Activated CD8-positive, alpha-beta T cell treated with anti-CD3 and anti-CD28 coated beads for 36 hours (primary cell): ENCODE measurements at regions of chr22 and their contacts with region 1.

Region 1: DNA sequence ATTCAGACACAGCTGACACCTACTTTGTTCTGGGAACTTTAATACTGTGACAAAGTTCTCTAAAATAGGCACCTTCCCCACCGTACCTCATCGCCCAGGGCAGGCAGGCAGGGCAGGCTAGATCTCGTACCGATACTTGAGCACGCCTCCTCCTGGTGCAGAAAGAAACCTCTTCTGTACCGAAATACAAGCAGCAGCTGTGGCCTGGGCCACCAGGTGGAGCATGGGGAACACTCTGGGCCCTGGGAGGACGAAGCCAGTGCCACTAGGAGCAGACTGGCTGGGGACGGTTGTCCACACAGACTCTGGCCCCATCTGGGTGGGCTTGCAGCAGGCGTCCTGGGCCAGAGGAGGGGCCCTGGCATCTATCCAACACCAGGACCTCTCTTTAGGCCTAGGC is 12.8 kb downstream of the PMM1 start:
- DNase-seq: peak; percentile 64
- ATAC-seq: peak; percentile 75
- H3K4me3 Mint-ChIP-seq: no peak overlapping the region
- H3K27ac Mint-ChIP-seq: no peak overlapping the region
- H3K4me1 Mint-ChIP-seq: no peaks in the 10 kb centered on the region
- H3K27me3 Mint-ChIP-seq: no peaks in the 10 kb centered on the region
- CTCF ChIP-seq: peak; percentile 61

Region 2: GRCh38 chr22:41448189-41448808 is 128.6 kb before region 1 on chr22:
- CTCF ChIA-PET with region 1: no interaction called
- POLR2A ChIA-PET with region 1: no interaction called
- intact Hi-C with region 1: no loop called
- DNase-seq: peak; percentile 95
- ATAC-seq: peak; percentile 67
- H3K4me3 Mint-ChIP-seq: peak overlapping the region; percentile 90
- H3K27ac Mint-ChIP-seq: peak overlapping the region; percentile 99
- H3K4me1 Mint-ChIP-seq: peaks cover 10% of the 10 kb centered on the region
- H3K27me3 Mint-ChIP-seq: no peaks in the 10 kb centered on the region
- CTCF ChIP-seq: no peak

Region 3: DNA sequence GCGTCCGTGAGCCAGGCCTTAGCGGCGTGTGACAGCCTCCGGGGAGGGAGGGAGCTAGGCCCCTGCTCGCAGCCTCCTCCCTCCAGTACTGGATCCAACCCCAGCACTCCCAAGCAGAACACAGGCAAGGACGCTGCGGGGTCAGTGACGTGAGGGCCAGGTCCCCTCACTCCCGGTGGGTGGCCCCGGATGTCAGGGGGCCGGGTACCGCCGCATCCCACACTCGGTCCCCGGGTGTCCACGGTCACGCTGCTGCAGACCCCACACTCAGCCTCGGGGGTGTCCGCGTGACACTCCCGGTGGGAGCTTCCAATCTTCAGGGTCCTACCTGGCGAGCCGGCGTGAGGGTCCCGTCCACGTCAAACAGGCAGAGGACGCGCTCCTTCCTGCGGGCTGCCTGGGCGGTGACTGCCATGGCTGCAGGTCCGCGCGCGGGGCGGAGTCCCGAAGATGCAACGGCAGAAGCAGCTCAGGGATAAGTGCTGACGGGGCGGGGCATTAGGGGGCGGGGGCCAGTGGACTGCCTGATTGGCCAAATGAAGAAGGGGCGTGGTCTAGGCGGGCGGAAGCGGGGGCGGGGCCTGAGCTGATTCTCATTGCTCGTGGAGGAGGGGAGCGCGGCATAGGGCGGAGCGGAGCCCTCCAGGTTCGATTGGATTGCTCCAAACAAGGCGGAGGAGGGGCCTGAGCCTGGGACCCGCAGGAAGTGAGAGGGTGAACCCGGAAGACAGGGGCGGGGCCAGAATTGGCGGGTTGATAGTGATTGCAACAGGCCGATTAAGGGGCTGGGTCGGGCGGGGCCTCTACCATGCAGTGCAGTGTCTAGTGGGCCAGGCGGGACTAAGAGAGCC is 12.7 kb after region 1 on chr22 and contains the start of gene PMM1:
- CTCF ChIA-PET with region 1: interaction called, 8 read pairs
- POLR2A ChIA-PET with region 1: interaction called, 10 read pairs
- intact Hi-C with region 1: no loop called
- DNase-seq: peak; percentile 100
- ATAC-seq: peak; percentile 98
- H3K4me3 Mint-ChIP-seq: peak within 1 kb of the TSS; percentile 95
- H3K27ac Mint-ChIP-seq: peak within 1 kb of the TSS; percentile 88
- H3K4me1 Mint-ChIP-seq: peaks cover 12% of the 10 kb centered on the region
- H3K27me3 Mint-ChIP-seq: no peaks in the 10 kb centered on the region
- CTCF ChIP-seq: no peak
- total RNA-seq, gene PMM1: 29.8 to 29.9 TPM

Region 4: DNA sequence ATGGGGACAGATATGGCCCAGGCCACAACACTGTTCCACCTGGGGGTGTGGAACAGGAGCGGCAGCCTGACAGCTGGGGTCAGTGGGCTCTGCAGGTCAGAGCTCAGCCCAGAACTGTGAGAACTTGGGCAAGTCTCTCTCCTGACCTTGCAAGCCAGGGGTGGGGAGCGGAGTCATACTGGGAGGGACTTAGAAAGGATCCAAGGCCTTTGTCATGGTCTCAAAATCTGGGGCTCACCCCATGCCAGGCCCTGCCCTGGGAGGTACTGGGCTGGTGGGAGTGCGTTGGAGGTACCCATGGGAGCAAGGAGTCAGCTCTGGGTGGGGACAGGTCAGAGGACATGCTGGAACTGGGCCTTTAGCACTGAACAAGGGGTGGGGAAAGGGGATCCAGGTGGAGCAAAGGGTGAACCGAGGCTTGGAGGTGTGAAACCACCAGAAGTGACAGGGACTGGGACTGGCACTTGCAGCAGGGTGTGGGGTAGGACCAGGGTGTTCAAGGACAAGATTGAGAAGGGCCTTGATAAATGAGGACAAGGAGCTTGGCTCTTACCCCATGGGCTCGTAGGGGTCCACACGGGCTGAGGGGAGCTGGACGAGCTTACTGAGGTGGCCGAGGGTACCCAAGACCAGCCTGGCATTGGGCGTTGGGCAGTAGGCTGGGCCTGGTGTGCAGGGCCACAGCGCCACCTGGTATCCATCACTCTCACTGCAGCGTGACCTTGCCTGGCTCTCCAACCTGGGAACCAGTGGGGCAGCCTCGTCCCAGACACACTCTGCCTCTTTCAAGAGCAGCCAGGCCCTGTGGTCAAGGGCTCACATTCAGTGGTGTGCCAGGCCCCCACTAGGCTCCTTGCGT is 20.1 kb after region 1 on chr22:
- CTCF ChIA-PET with region 1: interaction called, 15 read pairs
- POLR2A ChIA-PET with region 1: interaction called, 4 read pairs
- intact Hi-C with region 1: no loop called
- DNase-seq: peak; percentile 60
- ATAC-seq: peak; percentile 82
- H3K4me3 Mint-ChIP-seq: no peak overlapping the region
- H3K27ac Mint-ChIP-seq: no peak overlapping the region
- H3K4me1 Mint-ChIP-seq: no peaks in the 10 kb centered on the region
- H3K27me3 Mint-ChIP-seq: no peaks in the 10 kb centered on the region
- CTCF ChIP-seq: peak; percentile 62